ENCODE measurements at regions of chr6 and their contacts with region 1.

Region 1: GRCh38 chr6:50030777-50031562 is 9.2 kb upstream of the DEFB110 start:
- DNase-seq: peak in 1 of 2 experiments; percentile 25
- H3K4me3 ChIP-seq: no peak overlapping the region
- H3K27ac ChIP-seq: no peak overlapping the region
- H3K4me1 ChIP-seq: no peaks in the 10 kb centered on the region
- H3K27me3 ChIP-seq: no peaks in the 10 kb centered on the region
- CTCF ChIP-seq: peak; percentile 58

Region 2: GRCh38 chr6:49856282-49856681 is 174.7 kb before region 1 on chr6:
- CTCF ChIA-PET with region 1: no interaction called
- POLR2A ChIA-PET with region 1: no interaction called
- intact Hi-C with region 1: loop called (anchors 10 kb)
- DNase-seq: no peak
- H3K4me3 ChIP-seq: no peak overlapping the region
- H3K27ac ChIP-seq: no peak overlapping the region
- H3K4me1 ChIP-seq: no peaks in the 10 kb centered on the region
- H3K27me3 ChIP-seq: no peaks in the 10 kb centered on the region
- CTCF ChIP-seq: no peak

Region 3: GRCh38 chr6:50007821-50008220 is 23.1 kb before region 1 on chr6:
- CTCF ChIA-PET with region 1: no interaction called
- POLR2A ChIA-PET with region 1: no interaction called
- intact Hi-C with region 1: no loop called
- DNase-seq: peak in 1 of 2 experiments; percentile 43
- H3K4me3 ChIP-seq: no peak overlapping the region
- H3K27ac ChIP-seq: no peak overlapping the region
- H3K4me1 ChIP-seq: no peaks in the 10 kb centered on the region
- H3K27me3 ChIP-seq: no peaks in the 10 kb centered on the region
- CTCF ChIP-seq: no peak

Measured in PC-9 (cell line).